ENCODE measurements at regions of chr2 and their contacts with region 1.

Region 1: GRCh38 chr2:207473049-207473930 is 56.5 kb upstream of the CREB1 start:
- DNase-seq: no peak
- ATAC-seq: peak; percentile 21 to 36
- H3K4me3 ChIP-seq: no peak overlapping the region
- H3K27ac ChIP-seq: no peak overlapping the region
- H3K4me1 ChIP-seq: peaks cover 4 to 9% of the 10 kb centered on the region in 2 donors
- H3K27me3 ChIP-seq: no peaks in the 10 kb centered on the region
- CTCF ChIP-seq: peak; percentile 9 to 51 (median 35)
- POLR2A ChIP-seq: no peak

Region 2: GRCh38 chr2:206693399-206694137 is 779.7 kb before region 1 on chr2:
- in situ Hi-C with region 1: loop called (anchors 5 kb)
- intact Hi-C with region 1: loop called (anchors 1 kb)
- DNase-seq: no peak
- ATAC-seq: peak; percentile 68 to 73
- H3K4me3 ChIP-seq: no peak overlapping the region
- H3K27ac ChIP-seq: no peak overlapping the region
- H3K4me1 ChIP-seq: no peaks in the 10 kb centered on the region
- H3K27me3 ChIP-seq: no peaks in the 10 kb centered on the region
- CTCF ChIP-seq: peak; percentile 46 to 71 (median 62)
- POLR2A ChIP-seq: no peak

Region 3: DNA sequence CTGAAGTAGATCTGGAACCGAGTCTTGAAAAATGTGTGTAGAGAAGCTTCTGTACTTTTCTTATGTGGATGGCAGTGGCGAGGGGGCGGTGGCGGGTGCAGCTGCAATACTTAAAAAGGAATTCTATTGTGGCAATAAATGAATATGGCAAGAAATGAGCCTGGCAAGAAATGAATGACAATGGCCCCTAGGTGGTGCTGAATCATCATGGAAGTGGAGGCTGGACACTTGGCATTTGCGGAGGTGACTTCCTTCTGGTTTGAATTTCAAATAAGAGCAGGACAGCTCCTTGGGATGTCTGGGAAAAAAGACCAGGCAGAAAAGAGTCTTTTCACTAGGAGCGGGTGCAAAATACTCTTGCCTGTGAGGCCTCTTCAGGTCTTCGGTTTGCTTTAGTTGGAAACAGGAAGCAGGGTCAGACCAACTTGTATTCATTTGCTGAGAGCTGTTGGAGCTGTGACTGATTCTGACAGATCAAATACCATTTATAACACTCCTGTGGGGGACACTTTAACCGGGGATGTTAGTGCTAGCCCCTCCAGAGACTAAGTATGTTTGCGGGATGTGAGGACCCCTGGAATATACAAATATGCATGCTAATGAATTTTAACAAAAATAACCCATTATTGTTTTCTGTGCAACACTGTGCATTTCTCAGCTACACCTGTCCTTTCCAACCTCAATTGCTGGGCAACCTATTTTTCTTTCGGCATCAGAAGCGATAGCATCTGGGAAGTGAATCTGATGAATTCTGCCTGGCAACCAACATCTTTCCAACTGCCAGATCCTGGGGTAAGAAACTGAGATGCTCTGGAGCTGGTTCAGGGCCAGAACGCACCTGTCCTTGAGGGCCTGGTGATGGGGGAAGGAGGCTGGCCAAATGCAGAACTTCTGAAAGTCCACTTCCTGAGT is 672.5 kb before region 1 on chr2:
- in situ Hi-C with region 1: loop called in 3 of 4 experiments (anchors 5 to 10 kb)
- intact Hi-C with region 1: loop called (anchors 2 kb)
- DNase-seq: peak; percentile 13 to 48
- ATAC-seq: peak; percentile 52 to 77
- H3K4me3 ChIP-seq: no peak overlapping the region
- H3K27ac ChIP-seq: no peak overlapping the region
- H3K4me1 ChIP-seq: peaks cover 0 to 10% of the 10 kb centered on the region in 2 donors
- H3K27me3 ChIP-seq: no peaks in the 10 kb centered on the region
- CTCF ChIP-seq: peak; percentile 51 to 64 (median 53)
- POLR2A ChIP-seq: no peak

Region 4: GRCh38 chr2:206981739-206982340 is 491.4 kb before region 1 on chr2:
- in situ Hi-C with region 1: loop called (anchors 5 to 10 kb)
- intact Hi-C with region 1: loop called (anchors 1 kb)
- DNase-seq: peak; percentile 29 to 30
- ATAC-seq: peak in 1 of 2 donors; percentile 74
- H3K4me3 ChIP-seq: no peak overlapping the region
- H3K27ac ChIP-seq: peak overlapping the region in 1 of 4 donors; percentile 10
- H3K4me1 ChIP-seq: peaks cover 0 to 8% of the 10 kb centered on the region in 2 donors
- H3K27me3 ChIP-seq: no peaks in the 10 kb centered on the region
- CTCF ChIP-seq: peak; percentile 54 to 82 (median 59)
- POLR2A ChIP-seq: no peak

Region 5: DNA sequence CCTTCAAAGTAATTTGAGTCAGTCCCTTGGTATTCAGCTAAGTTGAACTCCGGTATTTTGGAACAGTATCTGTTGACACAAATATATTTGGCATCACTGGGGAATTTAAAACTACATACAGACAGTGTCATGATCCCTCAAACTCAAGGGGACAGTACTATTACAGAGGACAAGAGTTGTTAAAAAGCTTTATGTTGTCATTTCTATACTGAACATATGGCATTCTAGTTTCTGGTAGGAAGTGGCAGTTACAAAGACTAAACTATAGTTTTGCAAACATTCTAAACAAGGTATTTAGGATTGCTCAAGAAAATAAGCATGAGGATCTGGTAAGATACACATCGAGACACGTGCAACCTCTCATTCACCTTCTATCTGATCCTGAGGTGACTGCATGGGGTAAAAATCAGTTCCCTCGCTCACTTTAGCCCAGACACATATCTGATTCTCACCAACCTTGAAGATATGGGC is 221.6 kb after region 1 on chr2:
- in situ Hi-C with region 1: no loop called
- intact Hi-C with region 1: no loop called
- DNase-seq: no peak
- ATAC-seq: peak; percentile 65 to 84
- H3K4me3 ChIP-seq: no peak overlapping the region
- H3K27ac ChIP-seq: peak overlapping the region; percentile 9 to 49 (median 28)
- H3K4me1 ChIP-seq: peaks cover 22 to 26% of the 10 kb centered on the region in 2 donors
- H3K27me3 ChIP-seq: no peaks in the 10 kb centered on the region
- CTCF ChIP-seq: no peak
- POLR2A ChIP-seq: no peak

Region 6: DNA sequence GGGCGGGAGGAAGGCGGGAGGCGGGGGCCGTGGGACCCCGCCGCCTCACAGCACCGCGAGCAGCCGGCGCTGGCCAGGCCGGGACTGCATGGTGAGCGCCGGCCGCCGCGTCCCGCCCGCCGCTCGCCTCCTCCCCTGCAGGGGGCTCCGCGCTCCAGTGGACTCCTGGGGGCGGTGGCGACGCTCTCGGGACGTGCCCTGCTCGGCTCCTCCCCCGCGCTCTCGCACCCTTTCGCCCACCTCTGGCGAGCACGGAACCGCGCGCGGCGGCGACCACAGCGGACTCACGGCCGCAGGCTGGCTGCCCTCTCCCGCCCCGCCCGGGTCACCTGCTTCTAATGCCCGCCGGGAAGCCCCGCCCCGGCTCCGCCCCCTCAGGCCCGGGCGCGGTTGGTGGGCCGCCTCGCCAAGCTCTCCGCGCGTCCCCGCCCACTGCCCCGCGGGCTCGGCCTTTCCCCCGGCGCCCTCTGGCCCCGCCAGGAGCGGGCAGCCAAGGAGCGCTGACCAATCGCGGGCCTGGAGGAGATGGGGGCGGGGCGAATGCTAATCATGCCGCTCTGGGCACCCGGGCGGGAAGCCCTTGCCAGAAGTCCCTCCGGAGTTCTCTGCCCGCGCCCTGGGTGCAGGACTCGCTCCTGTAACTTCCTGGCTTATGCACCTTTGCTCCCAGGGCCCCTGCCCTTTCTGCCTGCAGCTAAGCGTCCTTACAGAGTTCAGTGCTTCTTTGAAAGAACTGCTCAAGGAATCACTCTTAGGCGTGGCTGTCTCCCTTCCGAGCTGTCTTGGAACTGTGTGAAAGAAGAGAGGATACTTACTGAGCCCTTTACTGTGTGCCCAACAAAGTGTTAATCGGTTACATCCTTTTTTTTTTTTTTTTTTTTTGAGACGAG is 296.6 kb after region 1 on chr2 and contains the start of gene FZD5:
- in situ Hi-C with region 1: no loop called
- intact Hi-C with region 1: no loop called
- DNase-seq: peak; percentile 92 to 96
- ATAC-seq: peak; percentile 84 to 87
- H3K4me3 ChIP-seq: peak within 1 kb of the TSS; percentile 81 to 95 (median 86)
- H3K27ac ChIP-seq: peak within 1 kb of the TSS; percentile 88 to 98 (median 92)
- H3K4me1 ChIP-seq: peaks cover 13 to 25% of the 10 kb centered on the region in 2 donors
- H3K27me3 ChIP-seq: no peaks in the 10 kb centered on the region
- CTCF ChIP-seq: peak; percentile 23 to 64 (median 60)
- POLR2A ChIP-seq: peak; percentile 97 to 98
- total RNA-seq, gene FZD5: 3.0 to 4.8 (median 3.4) TPM